A549 (cell line): ENCODE measurements at regions of chr13 and their contacts with region 1.

Region 1: DNA sequence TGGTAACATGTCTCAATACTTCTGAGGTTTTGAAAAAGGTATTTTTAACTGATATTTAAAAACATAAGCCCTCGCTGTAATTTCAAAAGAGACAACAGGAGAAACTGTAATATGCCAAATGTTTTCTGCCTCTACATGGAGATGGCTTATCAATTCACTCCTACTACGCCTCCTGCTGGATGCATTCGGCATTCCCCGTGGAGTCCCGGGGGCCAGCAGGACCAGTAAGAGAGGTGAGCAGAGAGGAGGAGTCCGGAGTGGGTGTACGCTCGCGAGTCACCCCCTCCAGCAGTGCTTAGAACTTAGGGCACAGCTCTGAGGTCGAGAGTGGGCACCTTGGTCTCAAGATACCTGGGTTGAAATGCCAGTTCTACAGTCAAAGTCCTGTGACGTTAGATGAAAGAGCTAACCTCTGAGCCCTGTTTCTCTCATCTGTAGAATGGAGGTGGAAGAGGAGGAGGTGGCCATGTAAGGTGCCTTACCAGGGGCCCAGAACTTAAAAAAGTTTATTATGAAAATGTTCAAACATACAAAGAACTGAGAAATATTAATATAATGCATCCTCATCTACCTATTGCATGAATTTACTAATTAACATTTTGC is 110.2 kb downstream of the STK24 start:
- DNase-seq: peak; percentile 55 to 58
- ATAC-seq: peak; percentile 84 to 94
- H3K4me3 ChIP-seq: no peak overlapping the region
- H3K27ac ChIP-seq: no peak overlapping the region
- H3K4me1 ChIP-seq: no peaks in the 10 kb centered on the region
- CTCF ChIP-seq: peak; percentile 52; the same call in 2 of the 3 replicates
- EP300 ChIP-seq: no peak
- POLR2A ChIP-seq: no peak
- RAD21 ChIP-seq: peak in 1 of 2 experiments; percentile 33; a peak in 2 of 5 replicates

Region 2: GRCh38 chr13:98454389-98454881 is 12.3 kb before region 1 on chr13:
- CTCF ChIA-PET with region 1: interaction called, 11 read pairs
- POLR2A ChIA-PET with region 1: no interaction called
- DNase-seq: peak in 1 of 2 experiments; percentile 19
- ATAC-seq: peak in 1 of 2 experiments; percentile 38; a peak in 3 of 6 replicates
- H3K4me3 ChIP-seq: no peak overlapping the region
- H3K27ac ChIP-seq: peak overlapping the region; percentile 41 to 46; a peak in 1 of 6 replicates
- H3K4me1 ChIP-seq: peaks cover 11% of the 10 kb centered on the region; the same call in 2 of the 3 replicates
- CTCF ChIP-seq: no peak
- EP300 ChIP-seq: no peak
- POLR2A ChIP-seq: no peak
- RAD21 ChIP-seq: no peak